ENCODE measurements at regions of chr3 and their contacts with region 1.

Region 1: GRCh38 chr3:143001369-143002082 is at the start of gene U2SURP:
- DNase-seq: peak; percentile 98
- H3K4me3 ChIP-seq: peak within 1 kb of the TSS; percentile 73 to 93 (median 92)
- H3K27ac ChIP-seq: peak within 1 kb of the TSS; percentile 72
- H3K4me1 ChIP-seq: peaks cover 16% of the 10 kb centered on the region
- H3K27me3 ChIP-seq: peaks cover 0 to 2% of the 10 kb centered on the region in 2 experiments
- CTCF ChIP-seq: no peak
- POLR2A ChIP-seq: peak; percentile 84
- total RNA-seq, gene U2SURP: 85.2 and 92.4 TPM in 2 replicates

Region 2: GRCh38 chr3:142447852-142448823 is 553.4 kb before region 1 on chr3 and contains the start of gene XRN1:
- CTCF ChIA-PET with region 1: no interaction called
- POLR2A ChIA-PET with region 1: no interaction called
- dilution Hi-C with region 1: no loop called
- intact Hi-C with region 1: loop called (anchors 10 kb)
- DNase-seq: peak; percentile 93
- H3K4me3 ChIP-seq: peak within 1 kb of the TSS; percentile 44 to 98 (median 83)
- H3K27ac ChIP-seq: peak within 1 kb of the TSS; percentile 84
- H3K4me1 ChIP-seq: peaks cover 20% of the 10 kb centered on the region
- H3K27me3 ChIP-seq: no peaks in the 10 kb centered on the region
- CTCF ChIP-seq: no peak
- POLR2A ChIP-seq: peak; percentile 95
- total RNA-seq, gene XRN1: 34.4 and 40.0 TPM in 2 replicates

Region 3: GRCh38 chr3:142578327-142579223 is 423.0 kb before region 1 on chr3 and contains the start of gene ATR:
- CTCF ChIA-PET with region 1: interaction called, 5 read pairs
- POLR2A ChIA-PET with region 1: interaction called, 3 read pairs
- dilution Hi-C with region 1: no loop called
- intact Hi-C with region 1: loop called (anchors 2 kb)
- DNase-seq: peak; percentile 96
- H3K4me3 ChIP-seq: peak within 1 kb of the TSS; percentile 69 to 82 (median 81)
- H3K27ac ChIP-seq: peak within 1 kb of the TSS; percentile 81
- H3K4me1 ChIP-seq: peaks cover 15% of the 10 kb centered on the region
- H3K27me3 ChIP-seq: peaks cover 12 to 14% of the 10 kb centered on the region in 2 experiments
- CTCF ChIP-seq: no peak
- POLR2A ChIP-seq: peak; percentile 89
- total RNA-seq, gene ATR: 21.1 and 23.6 TPM in 2 replicates

Region 4: DNA sequence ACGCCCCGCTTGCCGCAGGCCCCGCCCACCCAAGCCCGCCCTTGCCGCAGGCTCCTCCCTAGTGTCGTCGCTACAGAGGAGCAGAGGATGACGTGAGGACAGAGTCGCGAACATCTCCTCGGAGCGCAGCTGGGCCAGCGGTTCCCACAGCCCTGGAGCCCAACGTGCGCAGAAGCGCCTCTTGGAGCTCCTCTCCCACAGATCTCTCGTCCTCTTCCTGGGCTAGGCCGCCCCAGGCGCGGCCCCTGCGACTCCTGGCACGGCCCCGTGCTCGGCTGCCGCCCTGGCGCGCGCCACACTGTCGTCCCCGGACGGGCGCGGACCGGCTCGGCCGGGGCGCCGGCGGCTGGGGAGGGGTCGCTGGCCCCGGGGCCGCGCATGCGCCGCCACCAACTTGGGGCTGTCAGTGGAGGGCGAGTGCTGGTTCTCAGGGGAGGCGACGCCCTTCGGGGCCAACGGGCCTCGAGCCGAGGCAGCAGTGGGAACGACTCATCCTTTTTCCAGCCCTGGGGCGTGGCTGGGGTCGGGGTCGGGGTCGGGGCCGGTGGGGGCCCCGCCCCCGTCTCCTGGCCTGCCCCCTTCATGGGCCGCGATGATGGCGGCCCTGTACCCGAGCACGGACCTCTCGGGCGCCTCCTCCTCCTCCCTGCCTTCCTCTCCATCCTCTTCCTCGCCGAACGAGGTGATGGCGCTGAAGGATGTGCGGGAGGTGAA is 277.4 kb before region 1 on chr3 and contains the start of gene TRPC1:
- CTCF ChIA-PET with region 1: no interaction called
- POLR2A ChIA-PET with region 1: no interaction called
- dilution Hi-C with region 1: no loop called
- intact Hi-C with region 1: loop called (anchors 5 kb)
- DNase-seq: peak; percentile 80
- H3K4me3 ChIP-seq: peak within 1 kb of the TSS; percentile 25 to 79 (median 68)
- H3K27ac ChIP-seq: peak within 1 kb of the TSS; percentile 72
- H3K4me1 ChIP-seq: peaks cover 7% of the 10 kb centered on the region
- H3K27me3 ChIP-seq: no peaks in the 10 kb centered on the region
- CTCF ChIP-seq: no peak
- POLR2A ChIP-seq: peak; percentile 69
- total RNA-seq, gene TRPC1: 5.6 and 5.9 TPM in 2 replicates

Region 5: GRCh38 chr3:142947799-142948575 is 53.5 kb before region 1 on chr3:
- CTCF ChIA-PET with region 1: no interaction called
- POLR2A ChIA-PET with region 1: no interaction called
- dilution Hi-C with region 1: no loop called
- intact Hi-C with region 1: no loop called
- DNase-seq: no peak
- H3K4me3 ChIP-seq: no peak overlapping the region
- H3K27ac ChIP-seq: no peak overlapping the region
- H3K4me1 ChIP-seq: no peaks in the 10 kb centered on the region
- H3K27me3 ChIP-seq: peaks cover 41 to 75% of the 10 kb centered on the region in 2 experiments
- CTCF ChIP-seq: no peak
- POLR2A ChIP-seq: no peak

Region 6: DNA sequence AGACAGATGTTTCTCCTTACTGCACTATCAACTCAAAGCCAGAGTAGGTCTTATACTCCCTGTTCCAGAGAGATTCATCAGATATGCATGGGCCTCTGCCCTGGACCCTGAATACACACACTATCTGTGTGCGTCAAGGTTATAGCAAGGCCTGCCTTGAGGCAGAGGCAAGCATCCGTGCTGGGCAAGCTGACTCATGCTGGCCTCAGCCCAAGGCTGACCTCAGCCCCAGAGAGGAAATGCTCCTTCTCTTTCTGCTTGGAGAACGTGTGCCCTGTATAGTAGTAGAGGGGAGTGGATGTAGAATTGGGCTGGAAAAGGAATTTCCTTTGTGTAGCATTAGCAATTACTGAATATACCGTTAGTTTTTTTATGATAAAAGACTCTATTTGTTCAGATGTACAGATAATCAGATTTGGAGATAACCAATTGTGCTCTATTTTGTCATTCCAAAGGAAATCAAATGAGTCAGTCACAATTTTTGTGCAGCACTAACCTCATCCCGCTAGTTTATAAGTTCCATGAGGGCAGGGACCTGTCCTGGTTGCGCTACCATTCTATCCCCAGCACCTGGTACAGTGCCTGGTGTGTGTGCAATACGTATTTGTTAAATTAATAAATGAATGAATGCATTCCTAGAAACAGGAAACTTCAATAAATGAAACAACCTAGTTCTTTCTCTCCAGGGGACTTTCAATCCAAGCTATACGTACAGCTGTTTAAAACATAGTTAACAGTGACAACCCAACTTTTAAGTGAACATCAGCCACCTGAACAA is 24.7 kb before region 1 on chr3:
- CTCF ChIA-PET with region 1: no interaction called
- POLR2A ChIA-PET with region 1: no interaction called
- dilution Hi-C with region 1: no loop called
- intact Hi-C with region 1: loop called (anchors 1 kb)
- DNase-seq: peak; percentile 92
- H3K4me3 ChIP-seq: no peak overlapping the region
- H3K27ac ChIP-seq: peak overlapping the region; percentile 27
- H3K4me1 ChIP-seq: peaks cover 14% of the 10 kb centered on the region
- H3K27me3 ChIP-seq: peaks cover 4 to 8% of the 10 kb centered on the region in 2 experiments
- CTCF ChIP-seq: no peak
- POLR2A ChIP-seq: no peak

Measured in endothelial cell of umbilical vein (primary cell).